ENCODE measurements at regions of chr17 and their contacts with region 1.

Region 1: DNA sequence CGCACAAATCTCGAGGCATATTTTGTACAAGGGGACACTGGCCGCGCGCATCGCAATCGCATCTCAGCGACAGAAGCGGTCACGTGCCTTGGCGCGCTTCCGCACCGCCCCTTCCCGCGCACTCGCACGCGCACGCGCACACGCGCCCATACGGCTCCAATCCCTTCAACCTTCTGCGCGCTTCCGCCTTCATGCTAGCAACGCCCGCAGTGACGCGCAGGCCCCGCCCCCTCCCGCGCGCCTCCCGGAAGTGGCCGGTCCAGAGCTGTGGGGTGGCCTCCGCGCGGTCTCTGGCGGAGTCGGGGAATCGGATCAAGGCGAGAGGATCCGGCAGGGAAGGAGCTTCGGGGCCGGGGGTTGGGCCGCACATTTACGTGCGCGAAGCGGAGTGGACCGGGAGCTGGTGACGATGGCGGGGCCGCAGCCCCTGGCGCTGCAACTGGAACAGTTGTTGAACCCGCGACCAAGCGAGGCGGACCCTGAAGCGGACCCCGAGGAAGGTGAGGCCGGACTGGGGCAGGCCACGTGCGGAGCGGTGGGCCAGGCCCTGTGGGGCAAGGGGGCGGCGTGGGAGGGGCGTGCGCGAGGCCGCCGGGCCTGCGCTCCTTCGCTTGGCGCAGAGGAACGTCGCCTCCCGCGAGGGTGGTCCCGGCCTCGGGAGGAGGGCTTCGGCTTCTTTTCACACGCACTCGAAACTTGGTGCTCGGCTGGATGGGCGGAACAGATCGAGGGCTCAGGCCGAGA is at the start of gene AATF:
- DNase-seq: peak; percentile 97 to 98 (median 98)
- H3K4me3 ChIP-seq: peak within 1 kb of the TSS; percentile 71 to 87 (median 83)
- H3K4me3 Mint-ChIP-seq: peak within 1 kb of the TSS; percentile 95 to 99
- H3K27ac ChIP-seq: peak within 1 kb of the TSS; percentile 80 to 91
- H3K27ac Mint-ChIP-seq: peak within 1 kb of the TSS; percentile 92 to 98 (median 95)
- H3K4me1 ChIP-seq: peaks cover 17 to 24% of the 10 kb centered on the region in 2 donors
- H3K4me1 Mint-ChIP-seq: peaks cover 42% of the 10 kb centered on the region
- H3K27me3 ChIP-seq: peaks cover 40 to 43% of the 10 kb centered on the region in 2 donors
- H3K27me3 Mint-ChIP-seq: peaks cover 38 to 40% (median 39%) of the 10 kb centered on the region in 3 donors
- CTCF ChIP-seq: no peak
- polyA plus RNA-seq, gene AATF: 24.3 to 57.9 (median 41.1) TPM

Region 2: DNA sequence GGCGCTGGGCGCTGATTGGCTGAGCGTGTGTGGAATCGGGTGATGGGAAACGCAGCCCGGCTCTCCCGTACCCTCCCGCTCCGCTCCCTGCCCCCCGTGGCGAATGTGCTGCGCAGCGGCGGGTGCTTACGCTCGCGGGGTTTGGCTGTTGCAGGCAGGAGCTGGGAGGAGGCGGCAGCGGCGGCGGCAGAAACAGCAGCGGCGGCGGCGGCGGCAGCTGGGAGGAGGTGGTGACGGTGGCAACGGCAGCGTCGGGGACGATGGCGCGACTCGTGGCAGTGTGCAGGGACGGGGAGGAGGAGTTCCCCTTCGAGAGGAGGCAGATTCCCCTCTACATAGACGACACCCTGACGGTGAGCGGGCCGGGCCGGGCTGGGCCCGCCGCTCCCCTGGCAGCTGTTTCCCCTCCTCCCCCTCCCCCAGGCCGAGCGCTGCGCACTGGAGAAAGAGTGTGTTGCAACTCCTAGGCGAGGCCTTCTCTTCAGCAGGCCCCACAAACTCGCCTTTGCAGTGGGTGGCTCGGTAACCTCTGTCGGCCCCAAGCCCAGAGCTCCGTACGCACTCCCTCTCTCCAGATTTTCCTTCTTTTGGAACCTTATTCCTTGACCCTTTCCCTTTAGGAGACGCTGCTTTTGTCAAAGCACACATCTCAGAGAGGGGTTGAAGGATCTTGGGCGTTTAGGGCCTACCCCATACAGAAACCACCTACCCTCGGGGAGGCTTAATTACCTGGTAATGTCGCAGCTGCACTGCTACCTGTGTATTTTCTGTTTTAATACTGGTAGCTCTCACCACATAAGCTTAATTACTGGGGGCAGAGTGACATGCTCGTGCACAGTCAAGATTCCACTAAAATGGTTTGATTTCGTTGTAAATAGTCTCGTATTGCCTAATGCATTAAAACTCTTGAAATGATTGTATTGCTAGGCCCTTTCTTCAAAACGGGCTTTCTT is 403.1 kb before region 1 on chr17:
- intact Hi-C with region 1: loop called in 1 of 2 experiments (anchors 10 kb)
- DNase-seq: peak; percentile 90 to 97 (median 94)
- H3K4me3 ChIP-seq: peak overlapping the region; percentile 68 to 96 (median 88)
- H3K4me3 Mint-ChIP-seq: peak overlapping the region; percentile 87 to 92
- H3K27ac ChIP-seq: peak overlapping the region; percentile 88 to 97
- H3K27ac Mint-ChIP-seq: peak overlapping the region; percentile 93 to 98 (median 96)
- H3K4me1 ChIP-seq: peaks cover 51 to 61% of the 10 kb centered on the region in 2 donors
- H3K4me1 Mint-ChIP-seq: peaks cover 48% of the 10 kb centered on the region
- H3K27me3 ChIP-seq: no peaks in the 10 kb centered on the region
- H3K27me3 Mint-ChIP-seq: no peaks in the 10 kb centered on the region
- CTCF ChIP-seq: no peak

Region 3: GRCh38 chr17:36601303-36602029 is 347.4 kb before region 1 on chr17 and contains the start of gene MRM1:
- intact Hi-C with region 1: loop called in 1 of 2 experiments (anchors 10 kb)
- DNase-seq: peak; percentile 86 to 90 (median 87)
- H3K4me3 ChIP-seq: peak within 1 kb of the TSS; percentile 72 to 98 (median 91)
- H3K4me3 Mint-ChIP-seq: peak within 1 kb of the TSS; percentile 91 to 93
- H3K27ac ChIP-seq: peak within 1 kb of the TSS; percentile 61 to 88
- H3K27ac Mint-ChIP-seq: peak within 1 kb of the TSS; percentile 82 to 92 (median 88)
- H3K4me1 ChIP-seq: peaks cover 18 to 24% of the 10 kb centered on the region in 2 donors
- H3K4me1 Mint-ChIP-seq: peaks cover 39% of the 10 kb centered on the region
- H3K27me3 ChIP-seq: no peaks in the 10 kb centered on the region
- H3K27me3 Mint-ChIP-seq: no peaks in the 10 kb centered on the region
- CTCF ChIP-seq: no peak
- polyA plus RNA-seq, gene MRM1: 0.82 to 2.3 (median 1.5) TPM

Region 4: GRCh38 chr17:36931697-36932382 is 17.0 kb before region 1 on chr17:
- intact Hi-C with region 1: loop called in 1 of 2 experiments (anchors 2 kb)
- DNase-seq: no peak
- H3K4me3 ChIP-seq: peak overlapping the region in 1 of 3 experiments; percentile 55
- H3K4me3 Mint-ChIP-seq: peak overlapping the region; percentile 74 to 95
- H3K27ac ChIP-seq: no peak overlapping the region
- H3K27ac Mint-ChIP-seq: peak overlapping the region in 1 of 7 donors; percentile 30
- H3K4me1 ChIP-seq: peaks cover 61 to 67% of the 10 kb centered on the region in 2 donors
- H3K4me1 Mint-ChIP-seq: peaks cover 68% of the 10 kb centered on the region
- H3K27me3 ChIP-seq: peaks cover 78 to 86% of the 10 kb centered on the region in 2 donors
- H3K27me3 Mint-ChIP-seq: peaks cover 83 to 88% (median 83%) of the 10 kb centered on the region in 3 donors
- CTCF ChIP-seq: no peak

Region 5: GRCh38 chr17:37130984-37131446 is 182.1 kb after region 1 on chr17:
- intact Hi-C with region 1: no loop called
- DNase-seq: no peak
- H3K4me3 ChIP-seq: no peak overlapping the region
- H3K4me3 Mint-ChIP-seq: no peak overlapping the region
- H3K27ac ChIP-seq: no peak overlapping the region
- H3K27ac Mint-ChIP-seq: no peak overlapping the region
- H3K4me1 ChIP-seq: peaks cover 0 to 6% of the 10 kb centered on the region in 2 donors
- H3K4me1 Mint-ChIP-seq: peaks cover 11% of the 10 kb centered on the region
- H3K27me3 ChIP-seq: no peaks in the 10 kb centered on the region
- H3K27me3 Mint-ChIP-seq: peaks cover 0 to 2% (median 0%) of the 10 kb centered on the region in 3 donors
- CTCF ChIP-seq: no peak

Measured in CD14-positive monocyte (primary cell).